Activated CD4-positive, alpha-beta memory T cell treated with anti-CD3 and anti-CD28 coated beads, Interleukin-2, amount 10 ng/mL, durations not matched to agents 7 days and 5 days (primary cell): ENCODE measurements at regions of chr9 and their contacts with region 1.

Region 1: DNA sequence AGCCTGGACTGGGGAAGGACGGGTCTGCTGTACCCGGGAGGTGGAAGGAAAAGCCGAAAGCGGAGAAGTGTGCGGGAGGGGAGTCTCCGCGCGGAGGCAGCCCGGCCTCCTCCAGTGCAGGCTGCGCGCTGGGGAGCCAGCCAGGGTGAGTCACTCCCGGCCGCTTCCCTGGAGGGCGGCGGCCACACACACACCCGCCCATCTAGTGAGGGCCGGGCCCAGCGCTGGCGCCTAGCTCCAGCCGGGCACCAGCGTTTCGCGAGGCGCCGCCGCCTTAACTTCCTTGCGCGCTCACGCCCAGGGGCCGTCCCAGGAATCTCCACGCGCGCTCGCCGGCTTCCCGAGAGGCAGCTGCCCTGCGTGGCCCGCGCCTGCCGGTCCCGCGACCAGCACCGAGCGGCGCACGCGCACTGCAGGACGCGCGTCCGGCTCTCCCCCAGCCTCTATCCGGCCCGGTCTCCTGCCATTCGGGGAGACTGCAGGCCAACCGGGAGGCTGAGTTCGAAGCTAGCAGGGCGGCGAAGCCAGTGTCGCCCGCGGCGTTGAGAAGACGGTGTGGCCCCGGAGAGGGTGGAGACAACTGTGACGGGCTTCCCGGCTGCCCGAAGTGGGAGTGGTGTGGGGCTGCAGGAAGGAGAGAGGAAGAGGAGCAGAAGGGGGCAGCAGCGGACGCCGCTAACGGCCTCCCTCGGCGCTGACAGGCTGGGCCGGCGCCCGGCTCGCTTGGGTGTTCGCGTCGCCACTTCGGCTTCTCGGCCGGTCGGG is at the start of gene JAK2:
- DNase-seq: peak; percentile 88
- H3K4me3 Mint-ChIP-seq: peak within 1 kb of the TSS; percentile 87
- H3K27ac Mint-ChIP-seq: peak within 1 kb of the TSS; percentile 98
- H3K4me1 Mint-ChIP-seq: peaks cover 49% of the 10 kb centered on the region
- H3K27me3 Mint-ChIP-seq: no peaks in the 10 kb centered on the region
- total RNA-seq, gene JAK2: 27.2 to 30.0 TPM

Region 2: GRCh38 chr9:4740638-4741364 is 244.0 kb before region 1 on chr9 and contains the start of gene AK3:
- CTCF ChIA-PET with region 1: no interaction called
- POLR2A ChIA-PET with region 1: interaction called, 22 read pairs
- DNase-seq: peak; percentile 88
- H3K4me3 Mint-ChIP-seq: peak within 1 kb of the TSS; percentile 92
- H3K27ac Mint-ChIP-seq: peak within 1 kb of the TSS; percentile 85
- H3K4me1 Mint-ChIP-seq: peaks cover 39% of the 10 kb centered on the region
- H3K27me3 Mint-ChIP-seq: no peaks in the 10 kb centered on the region
- total RNA-seq, gene AK3: 34.0 to 34.6 TPM

Region 3: DNA sequence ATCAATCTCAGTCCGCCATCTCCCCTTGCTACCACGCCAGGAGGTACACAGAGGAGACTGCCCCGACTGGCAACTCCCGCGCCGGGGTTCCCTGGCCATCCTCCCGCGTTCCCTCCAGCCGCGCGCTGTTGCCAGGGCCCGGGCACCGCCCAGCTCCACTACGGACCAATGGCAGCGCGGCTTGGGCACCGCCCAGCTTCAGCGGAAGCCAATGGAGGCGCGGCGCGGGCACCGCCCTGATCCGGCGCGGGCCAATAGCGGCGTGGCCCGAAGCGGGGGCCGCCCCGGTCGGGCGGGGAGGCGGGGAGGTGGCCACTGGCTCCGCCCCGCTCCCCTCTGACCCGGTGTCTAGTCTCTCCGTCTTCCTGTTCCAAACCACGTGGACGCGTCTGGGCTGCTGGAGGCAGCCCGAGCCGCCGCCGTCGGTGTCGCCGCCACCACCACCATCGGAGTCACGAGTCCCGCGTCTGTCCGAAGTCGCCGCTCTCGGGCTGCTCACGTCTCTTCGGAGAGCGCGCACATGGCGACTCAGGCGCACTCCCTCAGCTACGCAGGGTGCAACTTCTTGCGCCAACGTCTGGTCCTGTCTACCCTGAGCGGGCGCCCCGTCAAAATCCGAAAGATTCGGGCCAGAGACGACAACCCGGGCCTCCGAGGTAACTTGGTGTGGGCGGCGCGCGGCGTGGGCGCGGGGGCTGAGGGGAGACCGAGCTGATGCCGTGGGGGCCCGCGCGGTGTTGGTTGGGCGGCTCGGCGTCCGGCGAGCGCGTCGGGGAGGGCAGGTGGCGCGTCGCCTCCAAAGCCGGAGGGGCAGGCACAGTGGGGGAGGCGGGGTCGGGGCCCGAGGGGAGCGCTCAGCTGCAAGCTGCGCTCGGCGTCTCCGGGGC is 192.0 kb before region 1 on chr9 and contains the start of gene RCL1:
- CTCF ChIA-PET with region 1: interaction called, 54 read pairs
- POLR2A ChIA-PET with region 1: interaction called, 27 read pairs
- DNase-seq: peak; percentile 98
- H3K4me3 Mint-ChIP-seq: peak within 1 kb of the TSS; percentile 94
- H3K27ac Mint-ChIP-seq: peak within 1 kb of the TSS; percentile 89
- H3K4me1 Mint-ChIP-seq: peaks cover 44% of the 10 kb centered on the region
- H3K27me3 Mint-ChIP-seq: no peaks in the 10 kb centered on the region
- total RNA-seq, gene RCL1: 11.5 to 12.3 TPM

Region 4: DNA sequence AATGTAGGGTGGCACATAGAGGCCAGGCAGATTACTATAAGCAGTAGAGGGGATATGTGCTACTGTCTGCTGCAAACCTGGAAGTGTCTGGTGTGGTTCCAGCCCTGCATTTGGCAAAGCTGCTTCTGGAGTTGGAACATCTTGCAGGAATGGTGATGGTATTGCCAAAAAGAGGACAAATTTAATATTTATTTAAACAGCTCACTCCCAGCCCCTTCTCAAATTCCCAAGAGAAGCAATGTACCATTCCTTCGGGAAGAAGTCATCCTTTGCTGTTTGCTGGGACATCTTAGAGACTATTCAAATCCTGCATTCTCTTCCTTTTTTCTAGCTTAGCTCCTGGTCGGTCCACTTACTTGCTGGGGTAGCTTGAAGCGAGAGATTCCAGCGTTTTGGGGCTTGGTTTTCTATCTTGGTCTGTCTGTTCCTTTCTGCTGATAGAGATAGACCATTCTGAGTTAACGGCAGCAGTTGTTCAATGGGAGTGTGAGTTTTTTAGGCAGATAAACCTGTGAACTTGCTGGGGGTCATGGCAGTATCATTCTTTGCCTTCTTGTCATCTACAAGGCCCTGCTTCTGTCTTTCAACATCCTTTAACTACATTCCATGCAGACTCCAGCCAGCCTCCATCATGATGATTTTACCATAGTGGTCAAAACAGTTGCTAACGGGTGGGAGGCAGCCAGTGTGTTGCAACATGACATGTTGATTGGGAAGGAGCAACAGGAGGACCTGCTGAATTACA is 122.1 kb before region 1 on chr9:
- CTCF ChIA-PET with region 1: interaction called, 3 read pairs
- POLR2A ChIA-PET with region 1: interaction called, 20 read pairs
- DNase-seq: no peak
- H3K4me3 Mint-ChIP-seq: no peak overlapping the region
- H3K27ac Mint-ChIP-seq: no peak overlapping the region
- H3K4me1 Mint-ChIP-seq: peaks cover 38% of the 10 kb centered on the region
- H3K27me3 Mint-ChIP-seq: no peaks in the 10 kb centered on the region

Region 5: DNA sequence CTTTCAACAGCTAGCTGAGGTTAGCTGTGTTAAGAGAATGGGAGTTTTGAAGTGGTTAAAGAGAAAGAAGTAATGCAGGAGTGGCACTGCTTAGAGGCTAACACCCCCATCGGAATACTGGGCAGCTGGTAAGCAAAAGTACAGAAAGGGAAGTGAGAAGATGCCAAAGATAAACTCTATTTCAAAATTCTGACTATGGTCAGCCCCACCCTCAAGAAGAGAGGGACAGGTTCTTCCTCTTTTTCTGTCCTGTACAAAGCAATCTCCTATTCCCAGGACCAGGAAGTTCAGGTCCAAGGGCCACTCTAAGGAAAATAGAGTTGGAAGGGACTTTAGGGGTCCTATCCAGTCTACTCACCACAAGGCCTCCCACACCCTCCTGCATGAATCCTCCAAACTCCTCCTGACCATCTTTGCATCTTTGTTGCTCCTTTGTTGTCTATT is 45.7 kb before region 1 on chr9:
- CTCF ChIA-PET with region 1: interaction called, 20 read pairs
- POLR2A ChIA-PET with region 1: interaction called, 28 read pairs
- DNase-seq: no peak
- H3K4me3 Mint-ChIP-seq: no peak overlapping the region
- H3K27ac Mint-ChIP-seq: peak overlapping the region; percentile 80
- H3K4me1 Mint-ChIP-seq: peaks cover 71% of the 10 kb centered on the region
- H3K27me3 Mint-ChIP-seq: no peaks in the 10 kb centered on the region

Region 6: DNA sequence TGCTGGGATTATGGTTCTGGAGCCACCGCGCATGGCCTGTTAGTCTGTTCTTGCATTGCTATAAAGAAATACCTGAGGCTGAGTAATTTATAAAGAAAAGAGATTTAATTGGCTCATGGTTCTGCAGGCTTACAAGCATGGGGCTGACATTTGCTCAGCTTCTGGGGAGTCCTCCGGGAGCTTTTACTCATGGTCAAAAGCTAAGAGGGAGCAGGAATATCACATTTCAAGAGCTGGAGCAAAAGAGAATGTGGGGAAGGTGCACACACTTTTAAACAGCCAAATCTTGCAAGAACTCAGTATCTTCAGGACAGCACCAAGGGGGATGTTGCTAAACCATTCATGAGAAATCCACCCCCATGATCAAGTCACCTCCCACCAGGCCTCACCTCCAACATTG is 12.4 kb after region 1 on chr9:
- CTCF ChIA-PET with region 1: interaction called, 18 read pairs
- POLR2A ChIA-PET with region 1: interaction called, 5 read pairs
- DNase-seq: no peak
- H3K4me3 Mint-ChIP-seq: no peak overlapping the region
- H3K27ac Mint-ChIP-seq: no peak overlapping the region
- H3K4me1 Mint-ChIP-seq: peaks cover 52% of the 10 kb centered on the region
- H3K27me3 Mint-ChIP-seq: no peaks in the 10 kb centered on the region

Region 7: DNA sequence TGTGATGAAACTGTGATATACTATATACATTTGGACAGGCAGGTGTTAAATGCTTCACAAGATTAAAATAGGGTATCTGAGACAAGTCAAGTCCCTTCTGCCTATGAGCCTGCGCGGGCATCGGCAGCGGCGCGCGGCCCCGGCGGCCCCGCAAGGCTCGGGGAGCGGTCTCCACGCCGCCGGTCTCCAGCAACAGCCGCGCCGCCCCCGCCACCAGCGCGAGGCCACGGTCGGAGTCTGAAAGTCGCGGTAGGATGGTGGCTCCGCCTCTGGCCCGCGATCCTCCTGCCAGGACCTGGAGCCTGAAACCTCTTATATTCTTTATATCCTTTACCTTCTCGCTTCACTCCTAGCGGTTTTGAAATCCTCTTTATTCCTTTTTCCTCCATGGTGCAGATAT is 101.2 kb after region 1 on chr9:
- CTCF ChIA-PET with region 1: no interaction called
- POLR2A ChIA-PET with region 1: no interaction called
- DNase-seq: no peak
- H3K4me3 Mint-ChIP-seq: no peak overlapping the region
- H3K27ac Mint-ChIP-seq: no peak overlapping the region
- H3K4me1 Mint-ChIP-seq: no peaks in the 10 kb centered on the region
- H3K27me3 Mint-ChIP-seq: no peaks in the 10 kb centered on the region